ENCODE measurements at regions of chr6 and their contacts with region 1.

Region 1: GRCh38 chr6:43608310-43608763 is 20.7 kb downstream of the GTPBP2 start:
- DNase-seq: peak; percentile 75
- H3K4me3 Mint-ChIP-seq: no peak overlapping the region
- H3K27ac Mint-ChIP-seq: no peak overlapping the region
- H3K4me1 Mint-ChIP-seq: peaks cover 2% of the 10 kb centered on the region
- H3K27me3 Mint-ChIP-seq: no peaks in the 10 kb centered on the region

Region 2: GRCh38 chr6:42251911-42252637 is 1356.3 kb before region 1 on chr6:
- CTCF ChIA-PET with region 1: no interaction called
- intact Hi-C with region 1: no loop called
- DNase-seq: no peak
- H3K4me3 Mint-ChIP-seq: no peak overlapping the region
- H3K27ac Mint-ChIP-seq: no peak overlapping the region
- H3K4me1 Mint-ChIP-seq: no peaks in the 10 kb centered on the region
- H3K27me3 Mint-ChIP-seq: no peaks in the 10 kb centered on the region

Region 3: DNA sequence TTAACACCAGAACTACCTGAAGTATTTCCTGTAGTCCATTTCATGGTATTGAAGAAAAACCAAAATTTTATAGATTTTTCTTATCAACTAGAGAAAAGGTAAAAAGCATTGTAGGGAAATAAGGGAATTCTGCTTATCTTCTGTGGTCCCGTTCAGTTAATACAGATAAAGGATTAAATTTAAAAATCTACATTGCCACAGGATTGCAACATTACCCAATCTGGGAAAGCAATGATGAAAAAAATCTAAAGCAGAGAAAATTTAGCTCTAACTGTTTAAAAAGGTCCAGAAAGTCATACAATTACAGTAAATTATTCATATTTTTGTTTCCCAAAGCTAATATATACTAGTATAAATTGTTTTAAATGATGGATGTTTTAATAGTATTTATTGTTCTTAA is 14.4 kb before region 1 on chr6:
- CTCF ChIA-PET with region 1: interaction called, 31 read pairs
- intact Hi-C with region 1: no loop called
- DNase-seq: no peak
- H3K4me3 Mint-ChIP-seq: no peak overlapping the region
- H3K27ac Mint-ChIP-seq: no peak overlapping the region
- H3K4me1 Mint-ChIP-seq: no peaks in the 10 kb centered on the region
- H3K27me3 Mint-ChIP-seq: no peaks in the 10 kb centered on the region

Region 4: DNA sequence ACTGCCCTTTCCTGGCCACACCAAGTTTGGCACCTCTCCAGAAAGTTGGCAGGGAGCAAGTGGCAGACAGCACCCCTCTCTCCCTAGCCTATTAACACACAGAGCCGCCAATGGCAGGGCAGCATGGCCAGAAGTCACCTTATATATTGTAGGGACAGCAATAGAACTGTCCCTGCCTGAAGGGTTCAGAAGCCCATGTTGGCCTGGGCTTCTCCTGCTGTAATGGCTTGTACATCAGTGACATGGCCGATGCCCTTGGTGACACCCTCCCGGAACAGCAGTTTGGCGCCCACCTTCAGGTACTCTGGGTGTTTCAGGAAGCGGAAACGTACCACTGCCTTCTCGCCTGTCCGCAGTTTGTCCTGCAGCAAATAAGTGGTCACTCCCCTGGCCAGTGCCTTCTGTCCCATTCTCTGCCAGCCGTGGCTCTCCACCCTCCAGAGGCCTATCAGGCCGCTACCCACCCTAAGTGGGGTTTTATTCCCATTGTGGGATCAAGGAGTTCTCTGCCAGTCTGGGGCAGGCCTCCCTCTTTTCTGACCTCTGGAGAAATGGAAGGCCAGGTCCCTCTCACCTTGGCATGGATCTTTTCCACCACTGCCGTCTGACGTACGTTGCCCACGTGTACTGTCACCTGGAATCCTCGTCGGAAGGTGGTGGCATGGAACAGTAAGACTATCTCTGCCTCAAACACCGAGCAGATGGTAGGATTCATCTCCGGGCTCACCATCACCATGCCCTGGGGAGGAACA is 13.3 kb after region 1 on chr6:
- CTCF ChIA-PET with region 1: interaction called, 14 read pairs
- intact Hi-C with region 1: no loop called
- DNase-seq: no peak
- H3K4me3 Mint-ChIP-seq: no peak overlapping the region
- H3K27ac Mint-ChIP-seq: no peak overlapping the region
- H3K4me1 Mint-ChIP-seq: peaks cover 4% of the 10 kb centered on the region
- H3K27me3 Mint-ChIP-seq: no peaks in the 10 kb centered on the region

Region 5: GRCh38 chr6:43916924-43917877 is 308.9 kb after region 1 on chr6:
- CTCF ChIA-PET with region 1: no interaction called
- intact Hi-C with region 1: no loop called
- DNase-seq: no peak
- H3K4me3 Mint-ChIP-seq: no peak overlapping the region
- H3K27ac Mint-ChIP-seq: no peak overlapping the region
- H3K4me1 Mint-ChIP-seq: no peaks in the 10 kb centered on the region
- H3K27me3 Mint-ChIP-seq: no peaks in the 10 kb centered on the region

Measured in activated naive CD4-positive, alpha-beta T cell treated with anti-CD3 and anti-CD28 coated beads for 36 hours (primary cell).